ENCODE measurements at regions of chr3 and their contacts with region 1.

Region 1: DNA sequence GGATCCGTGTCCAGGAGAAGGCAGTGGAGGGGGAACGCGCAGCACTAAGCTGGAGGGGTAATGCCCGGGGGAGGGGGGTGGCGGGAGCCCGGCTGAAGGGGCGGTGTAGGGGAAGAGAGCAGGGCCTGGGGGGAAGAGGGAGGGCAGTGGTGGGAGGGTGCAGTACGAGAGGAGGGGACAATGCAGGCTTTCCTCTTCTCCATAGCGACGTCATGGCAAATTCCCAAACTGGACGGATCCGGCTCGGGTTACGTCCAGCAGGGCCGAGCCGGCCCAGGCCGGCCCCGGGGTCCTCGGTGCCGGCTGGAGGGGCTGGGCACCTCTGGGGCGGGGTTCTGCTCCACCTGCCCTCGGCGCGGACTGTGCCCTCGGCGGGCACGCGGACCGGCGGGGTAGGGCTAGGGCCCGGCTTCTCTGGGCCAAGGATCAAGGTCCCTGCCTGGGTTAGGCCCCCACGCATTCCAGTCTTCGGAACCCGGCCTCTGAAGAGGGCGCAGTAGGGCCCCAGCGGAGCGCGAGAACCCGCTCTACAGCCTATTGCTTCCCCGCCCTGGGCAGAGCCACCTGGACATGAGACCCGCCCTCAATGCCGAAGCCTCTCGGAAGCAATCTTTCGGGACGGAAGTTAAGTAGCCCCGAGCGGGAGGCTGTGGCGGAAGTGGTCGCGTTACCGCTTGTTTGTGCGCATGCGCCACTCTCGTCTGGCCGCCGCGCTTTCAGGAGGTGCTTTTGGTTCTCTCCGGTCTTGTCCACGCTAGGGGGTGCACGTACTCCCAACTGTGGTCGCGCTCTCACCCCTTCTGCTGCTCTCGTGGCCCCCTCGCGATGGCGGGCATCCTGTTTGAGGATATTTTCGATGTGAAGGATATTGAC is 1.4 kb downstream of the POLR2H start:
- DNase-seq: peak; percentile 99
- H3K4me3 Mint-ChIP-seq: peak overlapping the region; percentile 98
- H3K27ac Mint-ChIP-seq: peak overlapping the region; percentile 99
- H3K4me1 Mint-ChIP-seq: peaks cover 26% of the 10 kb centered on the region
- H3K27me3 Mint-ChIP-seq: peaks cover 8% of the 10 kb centered on the region

Region 2: GRCh38 chr3:183635431-183636220 is 727.3 kb before region 1 on chr3 and contains the start of gene KLHL24:
- intact Hi-C with region 1: loop called (anchors 2 kb)
- DNase-seq: peak; percentile 97
- H3K4me3 Mint-ChIP-seq: peak within 1 kb of the TSS; percentile 94
- H3K27ac Mint-ChIP-seq: peak within 1 kb of the TSS; percentile 96
- H3K4me1 Mint-ChIP-seq: peaks cover 20% of the 10 kb centered on the region
- H3K27me3 Mint-ChIP-seq: no peaks in the 10 kb centered on the region
- total RNA-seq, gene KLHL24: 6.7 and 6.9 TPM in 2 replicates

Region 3: DNA sequence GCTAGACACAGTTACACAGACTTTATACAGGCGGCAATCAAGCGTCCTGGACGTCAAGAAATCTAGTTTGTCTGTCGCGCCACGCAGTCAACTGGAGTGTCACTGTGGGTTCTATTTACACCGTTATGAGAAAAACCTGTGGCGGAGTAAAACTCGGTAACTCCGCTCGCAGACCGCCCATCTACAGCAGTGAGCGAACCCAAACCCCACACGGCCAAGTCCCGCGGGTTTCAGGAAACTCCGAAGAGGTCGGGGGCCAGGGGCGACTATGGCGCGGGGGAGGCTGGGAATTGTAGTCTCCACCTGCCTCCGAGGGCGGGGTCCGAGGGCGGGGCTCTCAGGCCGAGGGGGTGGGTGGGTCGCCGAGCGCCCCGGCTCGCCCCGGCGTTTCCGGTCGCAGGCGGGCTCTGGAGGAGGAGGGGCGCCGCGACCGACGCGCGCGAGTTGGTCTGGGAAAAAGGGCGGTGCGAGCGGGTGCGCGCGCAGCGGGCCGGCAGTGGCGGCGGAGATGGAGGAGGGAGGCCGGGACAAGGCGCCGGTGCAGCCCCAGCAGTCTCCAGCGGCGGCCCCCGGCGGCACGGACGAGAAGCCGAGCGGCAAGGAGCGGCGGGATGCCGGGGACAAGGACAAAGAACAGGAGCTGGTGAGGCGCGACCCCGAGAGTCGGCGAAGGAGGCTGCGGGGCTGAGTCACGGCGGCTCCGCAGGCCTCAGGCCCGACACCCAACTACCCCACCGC is 64.0 kb before region 1 on chr3 and contains the start of gene PSMD2:
- intact Hi-C with region 1: loop called (anchors 1 kb)
- DNase-seq: peak; percentile 98
- H3K4me3 Mint-ChIP-seq: peak within 1 kb of the TSS; percentile 99
- H3K27ac Mint-ChIP-seq: peak within 1 kb of the TSS; percentile 90
- H3K4me1 Mint-ChIP-seq: peaks cover 20% of the 10 kb centered on the region
- H3K27me3 Mint-ChIP-seq: peaks cover 6% of the 10 kb centered on the region
- total RNA-seq, gene PSMD2: 280 and 283 TPM in 2 replicates

Region 4: DNA sequence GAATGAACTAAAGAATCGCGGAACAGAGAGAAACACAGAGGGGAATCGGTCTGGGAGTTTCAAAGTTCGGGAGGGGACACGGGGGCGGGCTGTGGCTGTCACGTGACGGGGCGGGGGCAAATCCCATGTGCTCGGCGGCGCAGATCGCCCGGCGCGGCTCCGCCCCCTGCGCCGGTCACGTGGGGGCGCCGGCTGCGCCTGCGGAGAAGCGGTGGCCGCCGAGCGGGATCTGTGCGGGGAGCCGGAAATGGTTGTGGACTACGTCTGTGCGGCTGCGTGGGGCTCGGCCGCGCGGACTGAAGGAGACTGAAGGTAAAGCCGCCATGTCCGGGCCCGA is 48.6 kb before region 1 on chr3 and contains the start of gene EIF4G1:
- intact Hi-C with region 1: loop called (anchors 1 kb)
- DNase-seq: peak; percentile 98
- H3K4me3 Mint-ChIP-seq: peak within 1 kb of the TSS; percentile 89
- H3K27ac Mint-ChIP-seq: peak within 1 kb of the TSS; percentile 89
- H3K4me1 Mint-ChIP-seq: peaks cover 28% of the 10 kb centered on the region
- H3K27me3 Mint-ChIP-seq: no peaks in the 10 kb centered on the region
- total RNA-seq, gene EIF4G1: 680 and 700 TPM in 2 replicates

Region 5: GRCh38 chr3:184335661-184336546 is 27.0 kb before region 1 on chr3:
- intact Hi-C with region 1: loop called (anchors 1 kb)
- DNase-seq: peak; percentile 98
- H3K4me3 Mint-ChIP-seq: peak overlapping the region; percentile 89
- H3K27ac Mint-ChIP-seq: peak overlapping the region; percentile 92
- H3K4me1 Mint-ChIP-seq: peaks cover 58% of the 10 kb centered on the region
- H3K27me3 Mint-ChIP-seq: no peaks in the 10 kb centered on the region

Region 6: DNA sequence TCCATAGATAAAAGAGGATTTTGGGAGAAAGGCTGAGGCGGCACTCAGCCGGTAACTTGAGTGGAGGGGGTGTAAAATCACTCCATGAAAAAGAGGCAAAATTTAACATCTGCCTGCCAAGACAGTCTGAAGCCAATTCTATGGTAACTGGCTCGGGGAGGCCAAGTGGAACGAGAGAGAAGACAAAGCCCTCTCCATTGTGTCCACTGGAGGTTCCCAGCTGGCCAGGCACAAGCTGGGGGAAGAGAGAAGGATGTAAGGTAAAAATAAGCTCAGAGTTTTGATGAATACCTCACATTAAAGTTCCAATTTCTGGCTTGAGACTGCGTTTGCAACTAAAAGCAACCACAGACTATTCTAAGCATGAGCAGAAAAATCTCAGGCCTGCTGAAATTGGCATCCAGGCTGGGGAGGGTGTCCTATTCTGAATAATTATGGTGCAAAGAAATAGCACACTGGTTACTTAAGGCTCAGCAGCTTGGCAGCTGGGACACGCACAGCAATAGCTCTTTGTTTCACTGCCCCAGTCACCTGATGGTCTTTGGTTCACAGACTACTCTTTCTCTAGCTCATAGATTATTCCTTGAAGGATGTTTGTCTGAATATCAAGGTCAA is 65.8 kb after region 1 on chr3:
- intact Hi-C with region 1: no loop called
- DNase-seq: no peak
- H3K4me3 Mint-ChIP-seq: no peak overlapping the region
- H3K27ac Mint-ChIP-seq: no peak overlapping the region
- H3K4me1 Mint-ChIP-seq: no peaks in the 10 kb centered on the region
- H3K27me3 Mint-ChIP-seq: peaks cover 2% of the 10 kb centered on the region

Region 7: GRCh38 chr3:184523825-184524615 is 161.1 kb after region 1 on chr3:
- intact Hi-C with region 1: loop called (anchors 5 kb)
- DNase-seq: peak; percentile 77
- H3K4me3 Mint-ChIP-seq: peak overlapping the region; percentile 59
- H3K27ac Mint-ChIP-seq: peak overlapping the region; percentile 66
- H3K4me1 Mint-ChIP-seq: peaks cover 15% of the 10 kb centered on the region
- H3K27me3 Mint-ChIP-seq: peaks cover 29% of the 10 kb centered on the region

Region 8: DNA sequence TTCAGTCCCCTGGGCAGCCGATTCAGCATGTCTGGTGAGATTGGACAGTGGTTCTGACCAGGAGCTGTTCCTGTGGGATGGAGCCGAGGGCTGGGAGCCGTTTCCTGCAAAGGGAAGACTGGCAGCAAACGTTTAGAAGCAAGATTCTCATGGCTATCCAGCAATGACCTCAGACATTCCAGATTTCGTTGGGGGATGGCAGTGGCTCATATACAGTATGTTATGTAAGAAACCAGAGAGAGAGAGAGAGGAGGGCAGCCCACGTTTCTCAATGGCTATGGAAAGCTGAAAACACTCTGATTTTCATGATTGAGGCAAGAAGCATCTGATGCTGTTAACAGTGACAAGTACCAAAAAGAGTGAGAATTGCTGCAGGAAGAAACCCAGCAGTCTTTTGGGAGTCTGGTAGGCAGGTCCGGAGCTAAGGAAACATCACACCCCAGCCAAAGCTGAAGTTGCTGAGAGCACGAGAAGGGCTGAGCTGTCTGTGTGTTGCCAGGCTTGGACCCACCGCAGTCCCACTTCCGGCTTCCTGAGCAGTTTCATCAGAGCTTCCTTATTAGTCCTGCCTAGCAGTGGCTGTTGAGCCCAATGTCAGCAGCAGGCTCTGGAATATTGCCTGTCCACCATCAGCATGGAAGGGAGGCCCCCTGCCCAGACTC is 423.5 kb after region 1 on chr3:
- intact Hi-C with region 1: no loop called
- DNase-seq: peak; percentile 66
- H3K4me3 Mint-ChIP-seq: no peak overlapping the region
- H3K27ac Mint-ChIP-seq: no peak overlapping the region
- H3K4me1 Mint-ChIP-seq: peaks cover 16% of the 10 kb centered on the region
- H3K27me3 Mint-ChIP-seq: peaks cover 3% of the 10 kb centered on the region

Region 9: DNA sequence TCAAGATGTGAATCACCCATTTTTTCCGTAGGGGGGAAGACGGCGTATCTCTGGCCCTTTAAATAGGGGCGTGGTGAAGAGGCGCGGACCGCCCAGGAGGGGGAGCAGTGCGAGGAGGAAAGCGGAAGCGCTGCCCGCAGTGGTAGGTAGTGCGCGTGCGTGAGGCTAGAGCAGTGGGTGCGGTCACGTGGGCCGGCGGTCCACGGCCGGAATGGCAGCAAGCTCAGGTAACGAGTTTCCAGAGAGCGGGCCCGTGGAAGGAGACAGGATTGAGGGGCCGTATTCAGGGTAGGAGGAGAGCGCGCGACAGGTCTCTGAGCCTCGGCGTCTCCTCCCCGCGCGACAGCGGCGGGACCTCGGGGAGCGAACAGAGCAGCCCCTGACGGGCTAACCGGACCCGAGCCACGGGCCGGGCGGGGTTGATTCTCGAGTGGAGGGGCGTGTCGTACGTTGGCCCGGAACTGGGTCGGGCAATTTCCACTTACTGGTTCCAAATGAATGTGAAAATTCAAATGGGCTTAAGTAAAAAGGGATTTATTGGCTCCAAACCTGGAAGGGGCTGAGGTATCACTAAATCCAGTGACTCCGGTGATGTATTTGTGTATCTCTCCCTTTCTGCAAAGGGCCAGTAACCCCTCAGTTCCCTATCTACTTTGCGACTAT is 449.2 kb after region 1 on chr3 and contains the start of gene VPS8:
- intact Hi-C with region 1: loop called (anchors 2 kb)
- DNase-seq: peak; percentile 99
- H3K4me3 Mint-ChIP-seq: peak within 1 kb of the TSS; percentile 97
- H3K27ac Mint-ChIP-seq: peak within 1 kb of the TSS; percentile 97
- H3K4me1 Mint-ChIP-seq: peaks cover 57% of the 10 kb centered on the region
- H3K27me3 Mint-ChIP-seq: peaks cover 3% of the 10 kb centered on the region
- total RNA-seq, gene VPS8: 33.6 and 33.9 TPM in 2 replicates